Heart left ventricle (tissue), 16 donors: ENCODE measurements at regions of chr11 and their contacts with region 1.

Region 1: GRCh38 chr11:114001416-114001815 is 26.5 kb downstream of the HTR3A start:
- DNase-seq: no peak
- ATAC-seq: no peak
- H3K4me3 ChIP-seq: no peak overlapping the region
- H3K27ac ChIP-seq: no peak overlapping the region
- H3K4me1 ChIP-seq: no peaks in the 10 kb centered on the region
- H3K27me3 ChIP-seq: peaks cover 0 to 30% (median 8%) of the 10 kb centered on the region in 9 donors
- CTCF ChIP-seq: no peak
- POLR2A ChIP-seq: no peak

Region 2: GRCh38 chr11:113977701-113978100 is 23.7 kb before region 1 on chr11:
- intact Hi-C with region 1: loop called in 1 of 10 experiments (anchors 2 kb)
- DNase-seq: no peak
- ATAC-seq: no peak
- H3K4me3 ChIP-seq: no peak overlapping the region
- H3K27ac ChIP-seq: no peak overlapping the region
- H3K4me1 ChIP-seq: peaks cover 0 to 8% (median 5%) of the 10 kb centered on the region in 12 donors
- H3K27me3 ChIP-seq: peaks cover 0 to 44% (median 0%) of the 10 kb centered on the region in 9 donors
- CTCF ChIP-seq: no peak
- POLR2A ChIP-seq: no peak